T-cell (primary cell): ENCODE measurements at regions of chr12 and their contacts with region 1.

Region 1: DNA sequence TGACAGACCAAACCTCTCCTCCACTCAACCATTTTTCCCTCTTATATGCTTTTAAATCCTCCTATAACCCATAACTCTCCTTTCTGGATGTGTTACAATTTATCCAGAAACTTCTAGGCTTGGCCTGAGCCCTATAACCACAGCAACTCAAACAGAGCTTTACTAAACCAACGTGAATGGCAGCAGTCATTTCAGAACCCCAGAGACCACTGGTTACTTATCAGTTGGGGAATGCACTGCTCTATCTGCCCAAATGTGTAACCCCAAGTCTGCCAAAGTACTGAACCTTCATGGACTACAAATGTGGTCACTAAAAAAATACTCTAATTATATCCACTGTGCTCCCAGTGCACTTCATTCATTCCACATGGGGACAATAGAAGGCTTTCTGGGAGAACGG is 42.0 kb downstream of the NAA25 start:
- DNase-seq: no peak
- ATAC-seq: no peak
- H3K4me3 ChIP-seq: no peak overlapping the region
- H3K4me3 Mint-ChIP-seq: no peak overlapping the region
- H3K27ac ChIP-seq: no peak overlapping the region
- H3K27ac Mint-ChIP-seq: no peak overlapping the region
- H3K4me1 ChIP-seq: no peaks in the 10 kb centered on the region
- H3K4me1 Mint-ChIP-seq: no peaks in the 10 kb centered on the region
- H3K27me3 ChIP-seq: no peaks in the 10 kb centered on the region
- H3K27me3 Mint-ChIP-seq: no peaks in the 10 kb centered on the region

Region 2: DNA sequence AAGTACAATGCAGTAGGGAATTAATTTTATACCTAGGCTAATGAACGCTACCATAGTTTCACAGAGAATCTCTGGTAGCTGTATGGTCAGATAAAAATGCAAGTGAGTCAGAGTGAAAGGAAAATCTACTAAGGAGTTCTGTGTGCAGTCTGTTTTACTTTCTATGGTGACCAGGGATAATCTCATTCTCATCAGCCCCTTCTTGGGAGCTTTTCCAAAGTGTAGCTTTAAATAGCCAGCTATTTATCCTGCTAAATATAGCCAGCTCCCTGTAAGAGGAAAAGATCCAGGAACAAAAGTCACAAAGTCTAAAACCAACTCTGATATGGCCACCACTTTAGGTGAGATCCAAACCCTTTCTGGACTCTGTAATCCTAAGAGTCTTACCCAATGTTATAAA is 129.1 kb before region 1 on chr12:
- CTCF ChIA-PET with region 1: interaction called, 3 to 13 read pairs
- POLR2A ChIA-PET with region 1: no interaction called
- DNase-seq: no peak
- ATAC-seq: no peak
- H3K4me3 ChIP-seq: no peak overlapping the region
- H3K4me3 Mint-ChIP-seq: no peak overlapping the region
- H3K27ac ChIP-seq: no peak overlapping the region
- H3K27ac Mint-ChIP-seq: no peak overlapping the region
- H3K4me1 ChIP-seq: no peaks in the 10 kb centered on the region
- H3K4me1 Mint-ChIP-seq: peaks cover 0 to under 1% (median 0%) of the 10 kb centered on the region in 3 donors
- H3K27me3 ChIP-seq: no peaks in the 10 kb centered on the region
- H3K27me3 Mint-ChIP-seq: no peaks in the 10 kb centered on the region

Region 3: DNA sequence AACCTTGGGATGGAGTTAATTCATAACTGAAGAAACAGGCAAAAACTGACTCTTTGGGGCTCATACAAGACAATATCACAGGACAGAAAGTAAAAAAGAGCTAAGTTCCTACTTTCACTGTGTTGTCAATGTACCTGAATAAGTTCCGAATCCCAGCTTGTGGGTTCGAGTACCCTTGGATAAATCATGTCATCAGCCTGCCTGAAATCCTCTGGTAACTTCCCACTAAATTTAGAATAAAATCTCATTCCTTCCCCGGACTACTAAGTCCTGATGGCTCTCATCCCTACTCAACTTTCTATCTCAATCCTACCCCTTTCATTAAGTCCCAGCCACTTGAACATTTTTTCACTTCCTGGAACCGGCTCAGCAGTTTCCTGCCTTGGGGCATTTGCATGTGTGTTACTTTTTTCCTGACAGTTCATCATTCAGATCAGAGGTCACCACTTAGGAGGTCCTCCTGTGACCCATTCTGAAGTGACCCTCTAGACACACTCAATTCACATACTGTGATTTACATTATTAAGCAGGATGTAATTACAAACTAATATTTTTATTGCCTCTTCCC is 40.7 kb before region 1 on chr12:
- CTCF ChIA-PET with region 1: no interaction called
- POLR2A ChIA-PET with region 1: no interaction called
- DNase-seq: no peak
- ATAC-seq: peak in 1 of 4 experiments; percentile 40
- H3K4me3 ChIP-seq: no peak overlapping the region
- H3K4me3 Mint-ChIP-seq: no peak overlapping the region
- H3K27ac ChIP-seq: peak overlapping the region; percentile 25
- H3K27ac Mint-ChIP-seq: peak overlapping the region; percentile 74 to 75
- H3K4me1 ChIP-seq: peaks cover 2 to 11% of the 10 kb centered on the region in 2 experiments
- H3K4me1 Mint-ChIP-seq: peaks cover 22 to 32% (median 30%) of the 10 kb centered on the region in 3 donors
- H3K27me3 ChIP-seq: no peaks in the 10 kb centered on the region
- H3K27me3 Mint-ChIP-seq: no peaks in the 10 kb centered on the region